ENCODE measurements at regions of chr12 and their contacts with region 1.

Region 1: DNA sequence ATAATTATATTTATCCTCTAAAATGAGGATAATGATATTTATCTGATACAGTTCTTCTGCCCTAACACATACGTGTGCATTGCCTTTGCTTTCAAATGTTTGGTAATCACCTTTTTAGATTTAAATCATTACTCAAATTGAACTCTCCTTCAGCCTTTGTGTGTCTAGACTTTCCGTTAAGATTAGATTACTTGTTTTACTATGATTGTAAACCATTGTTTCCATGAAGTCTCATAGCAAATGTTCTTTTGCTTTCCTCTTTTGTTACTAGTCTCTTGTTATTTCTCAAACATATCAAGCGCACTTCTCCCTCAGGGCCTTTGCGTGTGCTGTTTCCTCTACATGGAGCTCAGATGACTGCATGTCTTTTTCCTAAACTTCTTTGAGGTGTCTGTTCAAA is 63.7 kb downstream of the ETV6 start:
- DNase-seq: peak; percentile 41
- H3K4me3 Mint-ChIP-seq: no peak overlapping the region
- H3K27ac Mint-ChIP-seq: no peak overlapping the region
- H3K4me1 Mint-ChIP-seq: peaks cover 63% of the 10 kb centered on the region
- H3K27me3 Mint-ChIP-seq: no peaks in the 10 kb centered on the region

Region 2: DNA sequence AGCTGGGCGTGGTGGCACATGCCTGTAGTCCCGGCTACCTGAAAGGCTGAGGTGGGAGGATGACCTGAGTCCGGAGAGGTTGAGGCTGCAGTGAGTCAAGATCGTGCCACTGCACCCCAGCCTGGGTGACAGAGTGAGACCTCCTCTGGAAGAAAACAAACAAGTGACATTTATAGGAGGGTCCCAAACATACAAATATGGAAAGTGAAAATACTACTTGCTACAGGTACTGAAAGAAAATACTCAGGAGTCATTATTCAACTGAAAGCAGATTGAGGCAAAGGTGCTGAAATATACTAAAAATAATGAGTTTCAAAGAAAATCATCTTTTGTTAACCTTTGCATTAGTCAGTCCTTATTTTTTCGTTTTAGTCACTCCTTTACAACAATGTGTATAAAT is 10.2 kb before region 1 on chr12:
- CTCF ChIA-PET with region 1: no interaction called
- intact Hi-C with region 1: loop called (anchors 1 kb)
- DNase-seq: peak; percentile 14
- H3K4me3 Mint-ChIP-seq: no peak overlapping the region
- H3K27ac Mint-ChIP-seq: peak overlapping the region; percentile 76
- H3K4me1 Mint-ChIP-seq: peaks cover 49% of the 10 kb centered on the region
- H3K27me3 Mint-ChIP-seq: no peaks in the 10 kb centered on the region

Region 3: DNA sequence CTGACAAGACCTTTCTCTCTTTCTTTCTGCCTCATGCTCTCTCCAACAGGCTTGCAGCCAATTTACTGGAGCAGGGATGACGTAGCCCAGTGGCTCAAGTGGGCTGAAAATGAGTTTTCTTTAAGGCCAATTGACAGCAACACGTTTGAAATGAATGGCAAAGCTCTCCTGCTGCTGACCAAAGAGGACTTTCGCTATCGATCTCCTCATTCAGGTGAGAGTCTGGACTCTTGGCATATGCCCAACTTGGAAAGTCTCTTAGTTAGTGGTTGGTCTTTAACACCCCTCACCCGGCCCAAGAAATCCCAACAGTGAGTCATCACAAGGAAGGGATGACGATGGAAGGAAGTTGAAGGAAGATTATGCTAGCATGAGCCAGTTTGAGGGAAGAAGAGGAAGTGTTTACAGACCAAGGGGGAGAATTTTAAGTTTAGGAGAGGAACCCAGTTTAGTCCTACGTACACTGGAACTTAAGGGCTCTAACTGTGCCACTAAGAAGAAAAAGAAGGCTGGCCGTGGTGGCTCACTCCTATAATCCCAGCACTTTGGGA is 126.0 kb after region 1 on chr12:
- CTCF ChIA-PET with region 1: no interaction called
- intact Hi-C with region 1: no loop called
- DNase-seq: no peak
- H3K4me3 Mint-ChIP-seq: no peak overlapping the region
- H3K27ac Mint-ChIP-seq: no peak overlapping the region
- H3K4me1 Mint-ChIP-seq: peaks cover 46% of the 10 kb centered on the region
- H3K27me3 Mint-ChIP-seq: no peaks in the 10 kb centered on the region